ENCODE measurements at regions of chr11 and their contacts with region 1.

Region 1: GRCh38 chr11:57567515-57568329 is at the start of gene UBE2L6:
- DNase-seq: no peak
- H3K4me3 ChIP-seq: peak within 1 kb of the TSS; percentile 89
- CTCF ChIP-seq: peak; percentile 64

Region 2: GRCh38 chr11:57546869-57547475 is 20.8 kb before region 1 on chr11:
- CTCF ChIA-PET with region 1: interaction called, 11 read pairs
- POLR2A ChIA-PET with region 1: no interaction called
- DNase-seq: no peak
- H3K4me3 ChIP-seq: no peak overlapping the region
- CTCF ChIP-seq: peak; percentile 22

Region 3: GRCh38 chr11:57556061-57556460 is 11.7 kb before region 1 on chr11:
- CTCF ChIA-PET with region 1: interaction called, 29 read pairs
- POLR2A ChIA-PET with region 1: no interaction called
- DNase-seq: no peak
- H3K4me3 ChIP-seq: no peak overlapping the region
- CTCF ChIP-seq: no peak

Region 4: GRCh38 chr11:57596266-57596885 is 28.7 kb after region 1 on chr11:
- CTCF ChIA-PET with region 1: interaction called, 12 read pairs
- POLR2A ChIA-PET with region 1: no interaction called
- DNase-seq: no peak
- H3K4me3 ChIP-seq: no peak overlapping the region
- CTCF ChIP-seq: no peak

Region 5: GRCh38 chr11:57649826-57650738 is 82.4 kb after region 1 on chr11 and contains the start of gene YPEL4:
- CTCF ChIA-PET with region 1: interaction called, 306 read pairs
- POLR2A ChIA-PET with region 1: no interaction called
- DNase-seq: no peak
- H3K4me3 ChIP-seq: peak within 1 kb of the TSS; percentile 62
- CTCF ChIP-seq: no peak